ENCODE measurements at regions of chr11 and their contacts with region 1.

Region 1: GRCh38 chr11:14075118-14076078 is 112.9 kb downstream of the SPON1 start:
- DNase-seq: peak; percentile 27 to 84 (median 68)
- ATAC-seq: peak; percentile 88
- H3K4me3 ChIP-seq: peak overlapping the region in 1 of 2 experiments; percentile 14
- H3K4me3 Mint-ChIP-seq: peak overlapping the region; percentile 77
- H3K27ac ChIP-seq: peak overlapping the region in 1 of 2 experiments; percentile 5
- H3K27ac Mint-ChIP-seq: peak overlapping the region; percentile 88
- H3K4me1 ChIP-seq: peaks cover 60% of the 10 kb centered on the region
- H3K4me1 Mint-ChIP-seq: peaks cover 65% of the 10 kb centered on the region
- H3K27me3 ChIP-seq: no peaks in the 10 kb centered on the region
- H3K27me3 Mint-ChIP-seq: no peaks in the 10 kb centered on the region
- CTCF ChIP-seq: no peak

Region 2: GRCh38 chr11:13462901-13463778 is 612.3 kb before region 1 on chr11 and contains the start of gene BTBD10:
- CTCF ChIA-PET with region 1: no interaction called
- POLR2A ChIA-PET with region 1: no interaction called
- intact Hi-C with region 1: loop called in 1 of 2 experiments (anchors 10 kb)
- DNase-seq: peak; percentile 81 to 98 (median 90)
- ATAC-seq: peak; percentile 98
- H3K4me3 ChIP-seq: peak within 1 kb of the TSS; percentile 69 to 92
- H3K4me3 Mint-ChIP-seq: peak within 1 kb of the TSS; percentile 98
- H3K27ac ChIP-seq: peak within 1 kb of the TSS; percentile 87 to 92
- H3K27ac Mint-ChIP-seq: peak within 1 kb of the TSS; percentile 96
- H3K4me1 ChIP-seq: peaks cover 18% of the 10 kb centered on the region
- H3K4me1 Mint-ChIP-seq: peaks cover 49% of the 10 kb centered on the region
- H3K27me3 ChIP-seq: no peaks in the 10 kb centered on the region
- H3K27me3 Mint-ChIP-seq: no peaks in the 10 kb centered on the region
- CTCF ChIP-seq: no peak
- total RNA-seq, gene BTBD10: 17.0 to 19.2 TPM

Region 3: DNA sequence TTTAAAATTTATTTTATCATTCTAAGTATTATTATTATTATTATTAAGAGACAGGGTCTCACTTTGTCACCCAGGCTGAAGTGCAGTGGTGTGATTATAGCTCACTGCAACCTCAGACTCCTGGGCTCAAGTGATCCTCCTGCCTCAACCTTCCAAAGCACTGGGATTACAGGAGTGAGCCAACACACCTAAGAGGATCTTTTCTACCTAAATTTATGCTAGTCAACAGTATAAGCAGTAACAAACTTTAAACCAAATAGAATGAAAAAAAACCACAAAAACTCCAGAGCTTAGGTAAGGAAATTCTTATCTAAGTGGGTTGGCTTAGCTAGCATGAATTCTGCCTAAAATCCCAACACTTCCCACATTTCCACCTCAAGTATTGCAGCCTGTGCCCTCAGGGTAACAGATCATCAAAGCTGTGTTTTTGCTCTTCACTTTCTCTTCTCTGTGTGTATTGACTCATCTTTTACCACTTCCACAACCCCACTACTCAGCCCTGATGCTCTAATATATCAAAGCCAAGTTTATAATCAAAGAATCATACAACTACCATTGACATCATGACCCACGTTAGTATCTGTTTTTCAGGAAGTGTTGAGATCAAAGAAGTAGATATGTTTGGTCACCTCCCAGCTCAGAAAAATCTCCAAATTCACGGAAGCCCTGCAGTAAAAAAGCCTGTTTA is 206.5 kb before region 1 on chr11:
- CTCF ChIA-PET with region 1: no interaction called
- POLR2A ChIA-PET with region 1: no interaction called
- intact Hi-C with region 1: loop called (anchors 2 to 5 kb)
- DNase-seq: peak in 5 of 9 experiments; percentile 12 to 90 (median 57)
- ATAC-seq: peak; percentile 88
- H3K4me3 ChIP-seq: no peak overlapping the region
- H3K4me3 Mint-ChIP-seq: peak overlapping the region; percentile 1
- H3K27ac ChIP-seq: peak overlapping the region; percentile 54 to 82
- H3K27ac Mint-ChIP-seq: peak overlapping the region; percentile 93
- H3K4me1 ChIP-seq: peaks cover 21% of the 10 kb centered on the region
- H3K4me1 Mint-ChIP-seq: peaks cover 33% of the 10 kb centered on the region
- H3K27me3 ChIP-seq: no peaks in the 10 kb centered on the region
- H3K27me3 Mint-ChIP-seq: no peaks in the 10 kb centered on the region
- CTCF ChIP-seq: no peak

Region 4: DNA sequence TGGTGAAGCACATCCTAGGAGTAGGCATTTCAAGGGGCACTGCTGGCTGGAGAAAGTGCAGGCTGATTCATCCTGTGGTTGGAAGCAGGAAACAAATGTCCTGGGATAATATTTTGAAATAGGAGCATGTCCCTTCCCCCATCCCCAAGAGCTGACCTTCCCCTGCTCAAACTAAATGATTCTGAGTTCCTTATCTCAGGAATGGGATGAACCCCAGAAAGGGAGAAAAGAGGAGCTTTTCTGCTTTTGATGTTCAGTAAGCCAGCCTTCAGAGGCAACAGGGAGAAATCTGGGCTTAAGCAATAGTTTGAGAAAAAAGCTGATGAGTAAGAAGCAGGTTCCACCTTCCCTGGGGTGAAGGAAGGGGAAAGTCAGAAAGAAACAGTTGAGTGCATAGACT is 132.4 kb before region 1 on chr11:
- CTCF ChIA-PET with region 1: no interaction called
- POLR2A ChIA-PET with region 1: no interaction called
- intact Hi-C with region 1: loop called in 1 of 2 experiments (anchors 5 kb)
- DNase-seq: no peak
- ATAC-seq: no peak
- H3K4me3 ChIP-seq: no peak overlapping the region
- H3K4me3 Mint-ChIP-seq: no peak overlapping the region
- H3K27ac ChIP-seq: no peak overlapping the region
- H3K27ac Mint-ChIP-seq: no peak overlapping the region
- H3K4me1 ChIP-seq: peaks cover 44% of the 10 kb centered on the region
- H3K4me1 Mint-ChIP-seq: peaks cover 57% of the 10 kb centered on the region
- H3K27me3 ChIP-seq: no peaks in the 10 kb centered on the region
- H3K27me3 Mint-ChIP-seq: no peaks in the 10 kb centered on the region
- CTCF ChIP-seq: no peak

Region 5: GRCh38 chr11:14015476-14016110 is 59.8 kb before region 1 on chr11:
- CTCF ChIA-PET with region 1: no interaction called
- POLR2A ChIA-PET with region 1: no interaction called
- intact Hi-C with region 1: no loop called
- DNase-seq: no peak
- ATAC-seq: no peak
- H3K4me3 ChIP-seq: no peak overlapping the region
- H3K4me3 Mint-ChIP-seq: no peak overlapping the region
- H3K27ac ChIP-seq: no peak overlapping the region
- H3K27ac Mint-ChIP-seq: no peak overlapping the region
- H3K4me1 ChIP-seq: no peaks in the 10 kb centered on the region
- H3K4me1 Mint-ChIP-seq: no peaks in the 10 kb centered on the region
- H3K27me3 ChIP-seq: no peaks in the 10 kb centered on the region
- H3K27me3 Mint-ChIP-seq: no peaks in the 10 kb centered on the region
- CTCF ChIP-seq: no peak

Region 6: DNA sequence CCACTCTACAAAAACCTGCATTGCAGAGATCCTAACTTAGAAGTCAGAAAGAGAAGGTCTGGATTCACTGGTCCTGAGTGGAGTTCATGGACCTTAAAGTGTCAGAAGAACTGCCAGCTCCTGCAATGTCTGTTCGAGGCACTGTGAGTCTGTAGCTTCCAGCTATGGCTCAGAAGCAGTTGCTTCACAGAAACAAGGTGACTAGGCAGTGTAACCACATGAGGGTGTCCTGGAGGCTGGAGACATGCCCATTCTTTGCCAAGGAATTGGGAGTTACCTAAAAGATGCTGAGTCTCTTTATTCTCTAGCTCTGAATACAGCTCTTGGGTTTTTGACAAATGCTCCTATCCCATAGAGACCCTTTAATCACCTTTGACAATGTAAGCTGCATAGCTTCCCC is 17.7 kb after region 1 on chr11:
- CTCF ChIA-PET with region 1: interaction called, 4 read pairs
- POLR2A ChIA-PET with region 1: interaction called, 3 read pairs
- intact Hi-C with region 1: loop called in 1 of 2 experiments (anchors 2 kb)
- DNase-seq: no peak
- ATAC-seq: no peak
- H3K4me3 ChIP-seq: no peak overlapping the region
- H3K4me3 Mint-ChIP-seq: no peak overlapping the region
- H3K27ac ChIP-seq: no peak overlapping the region
- H3K27ac Mint-ChIP-seq: no peak overlapping the region
- H3K4me1 ChIP-seq: peaks cover 16% of the 10 kb centered on the region
- H3K4me1 Mint-ChIP-seq: peaks cover 28% of the 10 kb centered on the region
- H3K27me3 ChIP-seq: no peaks in the 10 kb centered on the region
- H3K27me3 Mint-ChIP-seq: no peaks in the 10 kb centered on the region
- CTCF ChIP-seq: no peak

Region 7: GRCh38 chr11:14124886-14125285 is 49.5 kb after region 1 on chr11:
- CTCF ChIA-PET with region 1: no interaction called
- POLR2A ChIA-PET with region 1: no interaction called
- intact Hi-C with region 1: loop called in 1 of 2 experiments (anchors 5 kb)
- DNase-seq: no peak
- ATAC-seq: no peak
- H3K4me3 ChIP-seq: no peak overlapping the region
- H3K4me3 Mint-ChIP-seq: no peak overlapping the region
- H3K27ac ChIP-seq: no peak overlapping the region
- H3K27ac Mint-ChIP-seq: no peak overlapping the region
- H3K4me1 ChIP-seq: no peaks in the 10 kb centered on the region
- H3K4me1 Mint-ChIP-seq: no peaks in the 10 kb centered on the region
- H3K27me3 ChIP-seq: no peaks in the 10 kb centered on the region
- H3K27me3 Mint-ChIP-seq: no peaks in the 10 kb centered on the region
- CTCF ChIP-seq: no peak

Region 8: DNA sequence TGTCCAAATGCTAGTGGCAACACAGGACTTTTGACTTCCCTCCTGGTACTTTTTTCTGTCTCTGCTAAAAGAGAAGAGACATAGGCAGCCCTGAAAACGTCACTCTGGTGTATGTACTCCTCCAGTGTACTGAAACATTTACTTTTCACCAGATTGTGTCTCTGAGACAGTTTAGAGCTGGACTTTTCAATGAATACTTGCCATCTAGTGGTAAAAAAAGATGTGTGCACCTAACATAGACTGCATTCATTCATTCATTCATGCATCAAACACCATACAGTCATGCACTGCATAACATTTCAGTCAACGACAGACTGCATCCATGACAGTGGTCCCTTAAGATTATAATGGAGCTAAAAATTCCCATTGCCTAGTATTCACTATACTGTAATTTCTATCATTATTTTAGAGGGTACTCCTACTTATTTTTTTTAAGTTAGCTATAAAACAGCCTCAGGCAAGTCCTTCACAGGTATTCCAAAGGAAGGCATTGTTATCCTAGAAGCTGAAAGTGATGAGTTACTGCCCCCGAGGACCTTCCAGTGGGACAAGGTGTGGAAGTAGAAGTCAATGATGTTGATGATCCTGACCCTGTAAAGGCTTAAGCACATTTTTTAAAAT is 73.4 kb after region 1 on chr11:
- CTCF ChIA-PET with region 1: interaction called, 8 read pairs
- POLR2A ChIA-PET with region 1: no interaction called
- intact Hi-C with region 1: loop called in 1 of 2 experiments (anchors 5 kb)
- DNase-seq: peak in 2 of 9 experiments; percentile 44 to 65
- ATAC-seq: peak; percentile 94
- H3K4me3 ChIP-seq: no peak overlapping the region
- H3K4me3 Mint-ChIP-seq: no peak overlapping the region
- H3K27ac ChIP-seq: no peak overlapping the region
- H3K27ac Mint-ChIP-seq: no peak overlapping the region
- H3K4me1 ChIP-seq: no peaks in the 10 kb centered on the region
- H3K4me1 Mint-ChIP-seq: peaks cover 3% of the 10 kb centered on the region
- H3K27me3 ChIP-seq: no peaks in the 10 kb centered on the region
- H3K27me3 Mint-ChIP-seq: no peaks in the 10 kb centered on the region
- CTCF ChIP-seq: peak; percentile 75

Measured in CD8-positive, alpha-beta T cell (primary cell).